HepG2 (cell line): ENCODE measurements at regions of chr13 and their contacts with region 1.

Region 1: DNA sequence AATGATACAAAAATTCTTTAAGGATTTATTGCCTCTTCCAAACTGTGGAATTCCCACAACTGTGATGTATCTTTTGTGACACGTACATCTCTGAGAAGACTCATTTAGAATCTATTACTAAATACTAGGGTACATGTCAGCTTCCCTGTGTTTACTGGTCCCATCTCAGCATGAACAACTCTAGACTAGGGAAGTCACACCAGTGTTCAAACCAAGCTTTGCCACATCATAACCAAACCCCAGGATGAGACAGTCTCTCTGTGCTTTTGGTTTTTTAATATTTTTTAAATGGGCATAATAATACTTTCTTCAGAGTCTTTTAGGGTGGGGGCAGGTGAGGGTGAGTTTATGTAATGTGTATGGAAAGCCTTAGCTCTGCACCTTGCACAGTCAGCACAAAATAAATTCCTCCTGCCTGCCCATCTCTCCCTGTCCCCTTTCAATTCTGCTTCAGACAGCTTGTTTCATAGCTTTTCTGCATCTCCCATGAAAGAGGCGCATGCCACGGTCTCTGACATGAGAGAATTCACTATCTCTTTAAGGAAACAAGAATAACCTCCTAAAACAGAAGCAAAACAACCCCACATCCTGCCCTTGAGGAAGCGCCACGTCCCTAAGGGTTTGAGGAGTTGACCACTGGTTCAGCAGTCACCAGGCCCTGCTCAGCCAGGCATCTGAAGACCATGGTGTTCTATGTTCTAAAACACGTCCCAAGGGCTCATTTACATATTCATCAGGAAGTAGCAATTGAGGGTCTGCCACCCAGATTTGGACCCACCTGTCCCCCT is 174.5 kb downstream of the USP12 start:
- DNase-seq: no peak
- ATAC-seq: no peak
- H3K4me3 ChIP-seq: no peak overlapping the region
- H3K27ac ChIP-seq: no peak overlapping the region
- H3K4me1 ChIP-seq: peaks cover 42% of the 10 kb centered on the region
- H3K27me3 ChIP-seq: peaks cover 0 to 22% of the 10 kb centered on the region in 2 experiments; a peak in 2 of 5 replicates
- CTCF ChIP-seq: no peak
- EP300 ChIP-seq: no peak
- POLR2A ChIP-seq: no peak
- RAD21 ChIP-seq: no peak

Region 2: DNA sequence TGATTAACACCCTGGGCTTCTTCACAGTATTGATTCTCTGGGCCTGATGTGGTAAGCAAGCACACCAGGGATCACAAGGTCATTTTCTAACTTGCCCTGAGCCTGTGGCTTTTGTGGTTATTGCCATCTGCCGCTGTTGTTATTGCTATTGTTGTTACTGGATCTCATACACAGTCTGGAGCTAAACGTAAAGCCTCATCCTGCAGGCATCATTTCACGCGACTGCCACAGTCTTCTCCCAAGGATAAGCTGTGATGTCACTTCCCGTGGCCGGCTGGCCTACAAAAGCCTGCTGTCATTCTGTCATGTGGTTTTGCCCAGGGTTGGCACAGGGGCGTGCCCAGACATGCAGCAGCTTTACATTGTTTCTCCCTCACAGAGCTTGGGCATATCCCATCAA is 82.5 kb before region 1 on chr13:
- CTCF ChIA-PET with region 1: no interaction called
- POLR2A ChIA-PET with region 1: no interaction called
- in situ Hi-C with region 1: no loop called
- intact Hi-C with region 1: no loop called
- DNase-seq: no peak
- ATAC-seq: no peak
- H3K4me3 ChIP-seq: no peak overlapping the region
- H3K27ac ChIP-seq: no peak overlapping the region
- H3K4me1 ChIP-seq: no peaks in the 10 kb centered on the region
- H3K27me3 ChIP-seq: peaks cover 4 to 26% of the 10 kb centered on the region in 2 experiments; a peak in 4 of 5 replicates
- CTCF ChIP-seq: no peak
- EP300 ChIP-seq: no peak
- POLR2A ChIP-seq: no peak
- RAD21 ChIP-seq: no peak

Region 3: GRCh38 chr13:27125357-27126282 is 128.5 kb after region 1 on chr13:
- CTCF ChIA-PET with region 1: no interaction called
- POLR2A ChIA-PET with region 1: interaction called, 3 read pairs
- in situ Hi-C with region 1: no loop called
- intact Hi-C with region 1: loop called (anchors 10 kb)
- DNase-seq: peak; percentile 33
- ATAC-seq: peak; percentile 90
- H3K4me3 ChIP-seq: peak overlapping the region in 1 of 3 experiments; percentile 26; a peak in 2 of 6 replicates
- H3K27ac ChIP-seq: peak overlapping the region; percentile 13
- H3K4me1 ChIP-seq: peaks cover 40% of the 10 kb centered on the region
- H3K27me3 ChIP-seq: no peaks in the 10 kb centered on the region
- CTCF ChIP-seq: peak; percentile 53
- EP300 ChIP-seq: no peak
- POLR2A ChIP-seq: no peak
- RAD21 ChIP-seq: peak; percentile 33; the same call in 1 of the 2 replicates